Naive thymus-derived CD4-positive, alpha-beta T cell (primary cell): ENCODE measurements at regions of chr7 and their contacts with region 1.

Region 1: DNA sequence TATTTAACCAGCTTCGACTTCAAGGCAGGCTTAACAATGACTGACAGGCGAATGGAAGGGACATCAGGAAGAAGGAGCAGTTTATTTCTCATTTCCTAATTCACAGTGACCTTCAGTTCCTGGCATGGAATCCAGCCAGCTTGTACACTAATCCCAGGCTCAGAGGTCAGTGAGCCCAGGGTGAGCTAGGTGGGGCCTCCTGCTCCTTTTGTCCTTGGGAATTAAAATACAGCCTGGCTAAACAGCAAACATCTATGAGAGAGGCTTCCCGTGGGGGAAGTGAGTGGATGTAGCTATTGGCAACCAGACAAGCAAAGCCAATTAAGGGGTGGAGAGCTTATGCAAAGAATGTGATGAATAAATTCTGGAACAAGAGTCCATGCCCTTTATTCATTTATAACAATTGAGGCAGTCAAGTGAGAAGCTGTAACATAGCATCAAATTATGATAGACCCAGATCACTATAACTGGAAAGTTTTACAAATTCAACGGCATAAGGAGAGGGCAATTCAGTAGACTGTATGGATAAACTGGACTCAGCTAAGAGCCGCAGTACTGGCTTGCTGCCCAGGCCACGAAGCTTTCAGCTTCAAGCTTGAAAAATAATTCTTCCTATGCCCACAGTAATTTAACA is 57.1 kb downstream of the STK17A start:
- DNase-seq: no peak
- ATAC-seq: no peak
- H3K4me3 ChIP-seq: no peak overlapping the region
- H3K4me3 Mint-ChIP-seq: peak overlapping the region in 9 of 10 donors; percentile 4 to 58 (median 39)
- H3K27ac ChIP-seq: peak overlapping the region; percentile 59
- H3K27ac Mint-ChIP-seq: peak overlapping the region in 7 of 9 donors; percentile 90 to 100 (median 93)
- H3K4me1 ChIP-seq: peaks cover 69 to 86% of the 10 kb centered on the region in 2 donors
- H3K4me1 Mint-ChIP-seq: peaks cover 48 to 100% (median 96%) of the 10 kb centered on the region in 7 donors
- H3K27me3 ChIP-seq: no peaks in the 10 kb centered on the region
- H3K27me3 Mint-ChIP-seq: no peaks in the 10 kb centered on the region

Region 2: DNA sequence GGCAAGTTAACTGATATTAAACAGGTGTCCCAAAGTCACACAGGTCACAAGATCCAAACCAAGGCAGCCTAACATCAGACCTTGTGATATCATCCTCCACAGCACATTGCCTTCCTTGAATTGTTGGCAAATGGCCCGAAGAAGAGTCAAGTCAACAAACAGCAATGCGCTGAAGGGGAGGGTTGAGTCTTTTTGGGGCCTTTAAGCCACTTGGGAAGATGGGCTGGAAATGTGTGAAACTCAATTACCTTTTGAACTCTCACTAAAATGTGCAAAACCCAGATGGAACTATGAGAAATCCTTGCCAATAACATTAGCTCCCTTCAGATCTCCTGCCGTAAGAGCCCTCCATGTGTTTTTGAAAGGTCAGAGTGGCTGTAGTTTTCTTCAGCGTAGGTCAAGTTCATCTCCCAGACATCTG is 104.9 kb before region 1 on chr7:
- CTCF ChIA-PET with region 1: no interaction called
- POLR2A ChIA-PET with region 1: no interaction called
- intact Hi-C with region 1: no loop called
- DNase-seq: no peak
- ATAC-seq: no peak
- H3K4me3 ChIP-seq: no peak overlapping the region
- H3K4me3 Mint-ChIP-seq: no peak overlapping the region
- H3K27ac ChIP-seq: no peak overlapping the region
- H3K27ac Mint-ChIP-seq: no peak overlapping the region
- H3K4me1 ChIP-seq: no peaks in the 10 kb centered on the region
- H3K4me1 Mint-ChIP-seq: no peaks in the 10 kb centered on the region
- H3K27me3 ChIP-seq: no peaks in the 10 kb centered on the region
- H3K27me3 Mint-ChIP-seq: peaks cover 0 to 4% (median 0%) of the 10 kb centered on the region in 5 donors

Region 3: DNA sequence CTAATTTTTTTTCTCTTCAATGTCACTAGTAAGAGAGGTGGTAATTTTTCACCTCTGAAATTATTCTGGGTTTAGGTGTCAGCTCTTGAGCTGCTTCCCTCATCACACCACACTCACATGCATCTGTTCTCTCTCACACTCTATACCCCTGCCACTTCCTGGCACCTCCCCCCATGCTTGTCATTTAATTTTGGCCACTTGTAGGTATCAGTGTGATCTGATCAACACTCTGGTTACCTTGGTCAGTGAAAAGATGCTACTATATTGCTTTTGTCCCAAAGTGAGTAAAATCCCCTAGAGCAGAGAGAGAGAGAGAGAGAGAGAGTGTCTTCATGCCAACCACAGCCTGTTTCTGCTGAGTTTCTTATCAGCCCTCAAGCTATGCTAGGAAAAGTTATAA is 14.5 kb before region 1 on chr7:
- CTCF ChIA-PET with region 1: interaction called, 4 read pairs
- POLR2A ChIA-PET with region 1: interaction called, 210 read pairs
- intact Hi-C with region 1: loop called in 1 of 2 experiments (anchors 1 kb)
- DNase-seq: peak in 7 of 9 donors; percentile 56 to 75 (median 68)
- ATAC-seq: peak; percentile 89
- H3K4me3 ChIP-seq: no peak overlapping the region
- H3K4me3 Mint-ChIP-seq: peak overlapping the region in 9 of 10 donors; percentile 54 to 90 (median 76)
- H3K27ac ChIP-seq: peak overlapping the region; percentile 63
- H3K27ac Mint-ChIP-seq: peak overlapping the region in 7 of 9 donors; percentile 71 to 97 (median 90)
- H3K4me1 ChIP-seq: peaks cover 65 to 76% of the 10 kb centered on the region in 2 donors
- H3K4me1 Mint-ChIP-seq: peaks cover 3 to 96% (median 76%) of the 10 kb centered on the region in 7 donors
- H3K27me3 ChIP-seq: no peaks in the 10 kb centered on the region
- H3K27me3 Mint-ChIP-seq: no peaks in the 10 kb centered on the region

Region 4: DNA sequence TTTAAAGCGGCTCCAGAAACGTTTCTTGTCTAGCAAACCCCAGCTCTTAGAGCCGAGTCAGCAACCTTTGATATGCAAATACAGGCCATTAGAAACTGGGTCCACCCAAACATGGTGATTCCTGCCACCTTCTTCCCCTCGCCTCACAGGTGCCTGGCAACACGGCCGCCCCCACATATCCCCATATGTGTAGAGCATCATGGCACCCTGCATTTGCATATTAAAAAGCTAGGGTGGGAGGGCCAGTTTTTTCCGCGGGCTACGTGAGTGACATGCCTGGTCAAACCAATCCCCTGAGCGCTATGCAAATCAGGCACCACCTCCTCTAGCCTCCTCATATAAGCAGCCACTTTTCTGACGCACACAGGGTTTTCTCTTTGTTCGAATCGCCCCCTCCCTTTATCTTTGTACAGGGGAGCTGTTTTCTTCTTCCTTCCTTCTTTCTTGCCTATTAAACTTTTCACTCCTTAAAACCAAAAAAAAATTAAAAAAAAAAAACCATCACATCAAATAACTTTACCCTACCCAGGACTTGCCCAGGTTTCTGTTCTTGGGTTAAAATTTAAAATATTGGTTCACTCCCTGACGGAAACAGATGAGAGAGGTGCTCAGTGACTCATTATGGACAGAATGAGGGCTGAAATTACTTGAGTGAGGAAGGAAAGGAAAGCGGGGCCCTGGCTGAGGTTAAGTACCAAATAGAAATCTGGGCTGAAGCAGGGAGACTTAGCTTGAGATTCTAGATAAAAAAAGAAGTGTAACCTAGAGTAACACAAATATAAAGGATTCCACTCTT is 29.5 kb after region 1 on chr7:
- CTCF ChIA-PET with region 1: no interaction called
- POLR2A ChIA-PET with region 1: interaction called, 12 read pairs
- intact Hi-C with region 1: no loop called
- DNase-seq: peak in 7 of 9 donors; percentile 30 to 56 (median 47)
- ATAC-seq: peak; percentile 86
- H3K4me3 ChIP-seq: no peak overlapping the region
- H3K4me3 Mint-ChIP-seq: peak overlapping the region; percentile 39 to 81 (median 66)
- H3K27ac ChIP-seq: peak overlapping the region; percentile 53
- H3K27ac Mint-ChIP-seq: peak overlapping the region; percentile 67 to 93 (median 88)
- H3K4me1 ChIP-seq: peaks cover 10 to 29% of the 10 kb centered on the region in 2 donors
- H3K4me1 Mint-ChIP-seq: peaks cover 39 to 95% (median 91%) of the 10 kb centered on the region in 7 donors
- H3K27me3 ChIP-seq: no peaks in the 10 kb centered on the region
- H3K27me3 Mint-ChIP-seq: no peaks in the 10 kb centered on the region

Region 5: GRCh38 chr7:43834463-43835251 is 194.7 kb after region 1 on chr7:
- CTCF ChIA-PET with region 1: no interaction called
- POLR2A ChIA-PET with region 1: no interaction called
- intact Hi-C with region 1: no loop called
- DNase-seq: peak in 8 of 9 donors; percentile 25 to 56 (median 46)
- ATAC-seq: peak; percentile 44
- H3K4me3 ChIP-seq: peak overlapping the region; percentile 79
- H3K4me3 Mint-ChIP-seq: peak overlapping the region; percentile 74 to 96 (median 84)
- H3K27ac ChIP-seq: peak overlapping the region; percentile 33
- H3K27ac Mint-ChIP-seq: peak overlapping the region; percentile 79 to 95 (median 86)
- H3K4me1 ChIP-seq: peaks cover 8 to 15% of the 10 kb centered on the region in 2 donors
- H3K4me1 Mint-ChIP-seq: peaks cover 2 to 27% (median 21%) of the 10 kb centered on the region in 7 donors
- H3K27me3 ChIP-seq: no peaks in the 10 kb centered on the region
- H3K27me3 Mint-ChIP-seq: peaks cover 0 to 6% (median 0%) of the 10 kb centered on the region in 5 donors